Heart right ventricle (tissue), 16 donors: ENCODE measurements at regions of chr2 and their contacts with region 1.

Region 1: DNA sequence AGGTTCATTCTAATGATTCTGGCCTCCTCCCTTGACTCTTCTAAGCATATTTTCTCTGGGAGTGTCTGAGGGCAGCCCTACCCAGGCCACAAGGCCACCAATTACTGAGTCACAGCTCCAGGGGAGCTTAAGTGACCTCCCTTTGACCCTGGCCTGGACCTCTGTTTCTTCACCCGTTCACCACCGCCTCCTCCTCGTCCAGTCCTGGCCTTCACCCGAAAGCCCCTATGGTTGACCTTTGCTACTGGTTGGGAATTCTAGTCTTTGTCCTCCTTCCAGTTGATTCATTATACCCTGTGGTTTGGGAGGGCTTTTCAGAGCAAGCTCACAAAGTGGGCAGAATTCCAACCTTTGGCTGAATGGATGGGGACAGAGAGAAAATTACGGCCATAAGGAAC is 72.6 kb downstream of the NRP2 start:
- DNase-seq: no peak
- ATAC-seq: peak in 3 of 8 donors; percentile 10 to 56 (median 47)
- H3K4me3 ChIP-seq: no peak overlapping the region
- H3K27ac ChIP-seq: peak overlapping the region in 5 of 10 donors; percentile 19 to 64 (median 31)
- H3K4me1 ChIP-seq: peaks cover 3 to 59% (median 25%) of the 10 kb centered on the region in 9 donors
- H3K27me3 ChIP-seq: no peaks in the 10 kb centered on the region
- CTCF ChIP-seq: no peak

Region 2: GRCh38 chr2:205629027-205629817 is 125.7 kb before region 1 on chr2:
- intact Hi-C with region 1: no loop called
- DNase-seq: no peak
- ATAC-seq: no peak
- H3K4me3 ChIP-seq: no peak overlapping the region
- H3K27ac ChIP-seq: no peak overlapping the region
- H3K4me1 ChIP-seq: no peaks in the 10 kb centered on the region
- H3K27me3 ChIP-seq: no peaks in the 10 kb centered on the region
- CTCF ChIP-seq: no peak

Region 3: GRCh38 chr2:205685314-205686055 is 69.4 kb before region 1 on chr2:
- intact Hi-C with region 1: loop called in 1 of 10 experiments (anchors 5 kb)
- DNase-seq: no peak
- ATAC-seq: peak in 6 of 8 donors; percentile 1 to 58 (median 14)
- H3K4me3 ChIP-seq: peak overlapping the region; percentile 37 to 78 (median 64)
- H3K27ac ChIP-seq: peak overlapping the region in 8 of 10 donors; percentile 30 to 91 (median 64)
- H3K4me1 ChIP-seq: peaks cover 8 to 81% (median 58%) of the 10 kb centered on the region in 9 donors
- H3K27me3 ChIP-seq: peaks cover 0 to 69% (median 25%) of the 10 kb centered on the region in 7 donors
- CTCF ChIP-seq: no peak